ENCODE measurements at regions of chr19 and their contacts with region 1.

Region 1: DNA sequence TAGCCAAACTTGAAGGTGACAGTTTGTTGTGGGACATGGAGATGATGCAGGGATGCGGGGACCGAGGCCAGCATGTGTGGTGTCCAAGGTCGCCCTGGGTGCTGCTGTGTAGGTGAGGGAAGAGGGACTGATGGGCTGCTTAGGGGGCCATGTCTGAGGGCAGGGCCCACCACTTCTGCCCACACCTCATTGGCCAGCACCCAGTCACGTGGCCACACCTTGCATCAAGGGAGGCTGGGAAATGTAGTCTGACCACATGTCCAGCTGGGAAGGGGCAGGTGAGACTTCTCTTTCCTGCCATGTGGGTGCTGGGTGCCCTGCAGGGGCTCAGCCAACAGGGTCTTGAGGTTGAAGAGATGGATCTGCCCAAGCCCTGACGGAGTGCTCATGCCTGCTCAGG is 88.9 kb downstream of the KDM4B start:
- DNase-seq: no peak
- H3K4me3 ChIP-seq: no peak overlapping the region
- H3K27ac ChIP-seq: no peak overlapping the region
- H3K4me1 ChIP-seq: peaks cover 0 to 13% (median 8%) of the 10 kb centered on the region in 4 donors
- H3K27me3 ChIP-seq: no peaks in the 10 kb centered on the region
- CTCF ChIP-seq: no peak
- EP300 ChIP-seq: no peak
- POLR2A ChIP-seq: no peak

Region 2: GRCh38 chr19:5031231-5032100 is 26.4 kb before region 1 on chr19:
- intact Hi-C with region 1: no loop called
- DNase-seq: peak; percentile 94
- H3K4me3 ChIP-seq: no peak overlapping the region
- H3K27ac ChIP-seq: no peak overlapping the region
- H3K4me1 ChIP-seq: peaks cover 44 to 76% (median 59%) of the 10 kb centered on the region in 4 donors
- H3K27me3 ChIP-seq: no peaks in the 10 kb centered on the region
- CTCF ChIP-seq: peak; percentile 92 to 98 (median 94)
- EP300 ChIP-seq: no peak
- POLR2A ChIP-seq: no peak

Region 3: DNA sequence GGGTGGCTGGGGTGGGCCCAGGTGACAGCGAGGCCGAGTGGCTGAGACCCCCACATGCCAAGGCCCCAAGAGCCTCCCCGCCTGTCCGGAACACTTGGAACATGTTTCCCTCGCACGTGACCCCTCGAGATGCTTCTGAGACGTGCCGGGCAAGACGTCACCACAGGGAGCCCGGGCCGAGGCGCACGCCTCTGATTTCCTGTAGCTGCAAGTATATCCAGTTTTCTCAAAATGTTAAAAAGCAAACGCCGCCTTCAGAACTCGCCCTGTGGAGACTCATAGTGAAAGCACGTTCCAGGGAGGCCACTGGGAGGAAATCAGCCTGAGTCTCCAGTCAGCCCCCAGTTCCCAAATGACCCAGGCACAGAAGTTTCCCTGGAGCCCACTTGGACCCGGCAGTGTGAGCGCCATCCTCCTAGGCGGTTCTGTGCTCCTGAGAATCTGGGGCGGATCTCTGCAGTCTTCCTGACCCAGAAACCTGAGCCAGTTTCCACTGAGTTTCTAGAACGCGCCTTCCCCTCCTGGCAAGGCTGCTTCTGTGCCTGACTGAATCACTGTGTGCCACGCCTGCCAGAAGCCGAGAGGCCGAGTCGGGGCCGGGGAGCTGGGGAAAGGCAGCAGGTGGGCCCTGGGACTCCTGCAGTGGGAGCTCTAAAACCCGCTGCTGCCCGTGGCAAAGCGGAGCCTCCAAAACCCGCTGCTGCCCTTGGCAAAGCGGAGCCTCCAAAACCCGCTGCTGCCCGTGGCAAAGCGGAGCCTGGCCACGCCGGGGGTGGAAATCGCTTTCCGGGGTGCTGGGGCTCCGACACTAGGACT is 90.3 kb after region 1 on chr19:
- intact Hi-C with region 1: loop called (anchors 10 kb)
- DNase-seq: no peak
- H3K4me3 ChIP-seq: no peak overlapping the region
- H3K27ac ChIP-seq: no peak overlapping the region
- H3K4me1 ChIP-seq: no peaks in the 10 kb centered on the region
- H3K27me3 ChIP-seq: no peaks in the 10 kb centered on the region
- CTCF ChIP-seq: no peak
- EP300 ChIP-seq: no peak
- POLR2A ChIP-seq: no peak

Measured in esophagus muscularis mucosa (tissue), 4 donors.